ENCODE measurements at regions of chr21 and their contacts with region 1.

Region 1: GRCh38 chr21:25607151-25608043 is at the start of gene MRPL39:
- DNase-seq: peak; percentile 83
- H3K4me3 Mint-ChIP-seq: peak within 1 kb of the TSS; percentile 100
- H3K27ac Mint-ChIP-seq: peak within 1 kb of the TSS; percentile 100
- H3K4me1 Mint-ChIP-seq: peaks cover 36% of the 10 kb centered on the region
- H3K27me3 Mint-ChIP-seq: no peaks in the 10 kb centered on the region
- total RNA-seq, gene MRPL39: 48.6 and 55.8 TPM in 2 replicates

Region 2: DNA sequence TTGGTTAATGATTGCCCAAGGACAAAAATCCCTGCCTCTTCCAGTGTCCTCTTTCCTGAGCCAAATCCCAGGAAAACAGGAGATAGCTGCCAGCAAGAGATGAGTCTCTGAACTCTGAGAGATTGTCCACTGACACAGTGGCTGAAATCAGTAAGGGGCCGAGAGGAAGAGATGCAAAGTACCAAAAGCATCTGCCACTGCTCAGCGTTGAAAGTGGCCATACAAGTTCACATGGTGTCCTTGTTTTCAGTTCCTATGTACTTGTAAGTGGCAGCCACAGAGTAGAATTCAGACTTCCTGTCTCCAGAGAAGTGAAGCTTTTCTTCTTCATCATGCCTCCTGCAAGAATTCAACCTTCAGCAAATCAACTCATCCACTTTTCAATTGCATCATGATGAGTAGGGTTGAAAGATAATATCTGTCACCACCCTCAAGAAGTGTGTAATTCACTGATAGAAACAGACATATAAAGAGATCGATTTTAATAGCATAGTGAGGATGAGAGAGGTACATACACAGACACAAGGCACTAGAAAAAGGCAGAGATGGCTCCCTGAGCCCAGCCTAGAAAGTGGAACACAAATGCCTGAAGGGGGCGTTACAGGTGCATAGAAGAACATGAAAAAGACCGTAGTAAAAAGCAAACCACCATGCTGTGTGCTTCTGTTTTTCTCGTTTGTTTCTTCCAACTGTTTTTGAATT is 185.9 kb before region 1 on chr21:
- intact Hi-C with region 1: loop called (anchors 1 kb)
- DNase-seq: peak; percentile 60
- H3K4me3 Mint-ChIP-seq: peak overlapping the region; percentile 77
- H3K27ac Mint-ChIP-seq: peak overlapping the region; percentile 77
- H3K4me1 Mint-ChIP-seq: peaks cover 46% of the 10 kb centered on the region
- H3K27me3 Mint-ChIP-seq: peaks cover 2% of the 10 kb centered on the region

Region 3: DNA sequence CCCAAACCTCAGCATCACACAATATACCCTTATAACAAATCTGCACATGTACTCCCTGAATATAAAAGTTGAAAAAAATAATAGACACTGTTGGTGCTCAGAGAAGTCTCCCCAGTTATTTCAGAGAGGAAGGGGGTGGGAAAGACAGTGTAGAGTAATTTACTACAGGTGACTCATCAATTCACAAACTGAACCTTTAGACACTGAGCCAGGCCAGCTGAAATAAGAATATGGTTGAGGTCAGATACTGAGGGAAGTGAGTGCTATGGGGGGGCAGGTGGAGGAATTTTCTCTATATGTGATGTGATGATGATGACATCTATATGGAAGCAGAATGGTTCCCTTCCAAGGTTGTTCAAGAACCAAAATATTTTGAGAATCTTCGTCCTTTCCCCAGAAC is 50.2 kb before region 1 on chr21:
- intact Hi-C with region 1: no loop called
- DNase-seq: no peak
- H3K4me3 Mint-ChIP-seq: no peak overlapping the region
- H3K27ac Mint-ChIP-seq: no peak overlapping the region
- H3K4me1 Mint-ChIP-seq: peaks cover 62% of the 10 kb centered on the region
- H3K27me3 Mint-ChIP-seq: no peaks in the 10 kb centered on the region

Region 4: GRCh38 chr21:25573409-25574206 is 33.8 kb before region 1 on chr21:
- intact Hi-C with region 1: loop called (anchors 1 kb)
- DNase-seq: peak; percentile 42
- H3K4me3 Mint-ChIP-seq: peak overlapping the region; percentile 83
- H3K27ac Mint-ChIP-seq: peak overlapping the region; percentile 97
- H3K4me1 Mint-ChIP-seq: peaks cover 83% of the 10 kb centered on the region
- H3K27me3 Mint-ChIP-seq: no peaks in the 10 kb centered on the region

Region 5: GRCh38 chr21:25708467-25709065 is 101.2 kb after region 1 on chr21:
- intact Hi-C with region 1: loop called (anchors 1 kb)
- DNase-seq: peak; percentile 4
- H3K4me3 Mint-ChIP-seq: no peak overlapping the region
- H3K27ac Mint-ChIP-seq: no peak overlapping the region
- H3K4me1 Mint-ChIP-seq: no peaks in the 10 kb centered on the region
- H3K27me3 Mint-ChIP-seq: no peaks in the 10 kb centered on the region

Region 6: GRCh38 chr21:25862596-25862995 is 255.2 kb after region 1 on chr21:
- intact Hi-C with region 1: loop called (anchors 1 kb)
- DNase-seq: no peak
- H3K4me3 Mint-ChIP-seq: no peak overlapping the region
- H3K27ac Mint-ChIP-seq: no peak overlapping the region
- H3K4me1 Mint-ChIP-seq: peaks cover 8% of the 10 kb centered on the region
- H3K27me3 Mint-ChIP-seq: peaks cover 8% of the 10 kb centered on the region

Region 7: DNA sequence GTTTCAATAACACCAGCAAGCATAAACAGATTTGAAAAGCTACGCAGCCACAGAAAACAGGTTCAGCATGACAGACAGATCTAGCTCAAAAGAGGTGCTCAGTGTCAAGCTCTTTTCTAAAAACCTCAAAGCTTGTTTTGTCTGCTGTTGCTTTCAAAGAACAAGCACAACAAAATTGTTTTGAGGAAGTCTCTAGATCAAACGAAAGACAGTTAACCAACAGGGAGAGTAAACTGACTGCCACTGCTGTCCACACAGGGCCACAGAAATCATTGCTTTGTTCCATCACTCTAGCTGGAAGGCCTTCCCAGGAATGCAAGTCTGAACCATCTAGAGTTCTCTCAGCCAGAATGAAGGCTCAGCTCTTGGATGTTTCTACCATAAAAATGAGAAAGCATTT is 550.4 kb after region 1 on chr21:
- intact Hi-C with region 1: no loop called
- DNase-seq: no peak
- H3K4me3 Mint-ChIP-seq: no peak overlapping the region
- H3K27ac Mint-ChIP-seq: no peak overlapping the region
- H3K4me1 Mint-ChIP-seq: peaks cover 20% of the 10 kb centered on the region
- H3K27me3 Mint-ChIP-seq: no peaks in the 10 kb centered on the region

Region 8: GRCh38 chr21:26170471-26171257 is 563.3 kb after region 1 on chr21 and contains the start of gene APP:
- intact Hi-C with region 1: loop called (anchors 1 kb)
- DNase-seq: peak; percentile 87
- H3K4me3 Mint-ChIP-seq: peak within 1 kb of the TSS; percentile 88
- H3K27ac Mint-ChIP-seq: peak within 1 kb of the TSS; percentile 67
- H3K4me1 Mint-ChIP-seq: peaks cover 28% of the 10 kb centered on the region
- H3K27me3 Mint-ChIP-seq: peaks cover 4% of the 10 kb centered on the region
- total RNA-seq, gene APP: 61.3 and 66.6 TPM in 2 replicates